CD4-positive, alpha-beta T cell (primary cell): ENCODE measurements at regions of chr21 and their contacts with region 1.

Region 1: DNA sequence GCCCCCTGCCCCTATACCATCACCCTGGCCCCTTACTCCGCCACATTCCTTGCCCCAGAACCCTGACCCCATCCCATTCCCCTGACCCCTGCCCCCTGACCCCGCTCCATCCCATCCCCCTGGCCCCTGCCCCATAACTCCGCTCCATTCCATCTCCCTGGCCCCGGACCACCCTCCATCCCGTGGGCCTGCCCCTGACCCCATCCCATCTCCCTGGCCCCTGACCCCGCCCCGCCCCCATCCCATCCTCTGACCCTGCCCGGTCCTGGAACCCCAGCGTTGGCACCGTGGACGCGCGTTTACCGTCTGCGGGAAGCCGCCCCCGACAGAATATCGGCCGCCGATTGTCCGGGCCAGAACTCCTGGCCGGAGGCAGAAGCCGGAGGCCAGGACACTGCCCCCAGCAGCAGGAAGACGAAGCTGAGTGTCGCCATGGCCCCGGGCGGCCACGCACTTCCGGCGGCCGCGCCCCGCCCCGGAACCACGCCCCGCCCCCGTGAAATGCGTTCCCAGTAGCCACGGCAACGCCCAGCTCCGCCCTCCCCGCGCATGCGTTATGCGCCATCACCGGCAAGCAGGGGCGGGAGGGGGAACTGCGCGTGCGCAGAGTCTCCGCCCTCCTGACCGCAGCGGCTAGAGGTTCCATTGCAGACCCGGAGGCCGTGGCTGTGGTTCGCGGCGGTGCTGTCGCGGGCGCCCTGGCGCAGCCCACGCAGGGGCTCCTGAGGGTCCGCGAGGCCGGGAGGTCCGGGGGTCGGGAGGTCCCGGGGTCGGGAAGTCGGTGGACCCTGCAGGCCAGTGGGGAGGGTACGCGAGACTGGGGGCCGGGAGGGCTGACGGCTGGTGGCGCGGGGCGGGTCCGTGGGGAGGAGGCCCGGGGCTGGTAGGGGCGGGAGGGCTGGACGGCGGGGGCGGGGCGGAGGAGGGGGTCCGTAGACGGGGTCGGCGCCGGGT is at the start of gene POFUT2:
- DNase-seq: peak; percentile 97 to 100 (median 99)
- ATAC-seq: peak; percentile 77
- H3K4me3 ChIP-seq: peak within 1 kb of the TSS; percentile 69
- H3K4me3 Mint-ChIP-seq: peak within 1 kb of the TSS; percentile 98
- H3K27ac ChIP-seq: peak within 1 kb of the TSS; percentile 53 to 57
- H3K27ac Mint-ChIP-seq: peak within 1 kb of the TSS; percentile 92
- H3K4me1 ChIP-seq: peaks cover 37% of the 10 kb centered on the region
- H3K4me1 Mint-ChIP-seq: peaks cover 40% of the 10 kb centered on the region
- H3K27me3 ChIP-seq: no peaks in the 10 kb centered on the region
- H3K27me3 Mint-ChIP-seq: no peaks in the 10 kb centered on the region
- CTCF ChIP-seq: no peak
- total RNA-seq, gene POFUT2: 56.6 to 57.2 TPM

Region 2: DNA sequence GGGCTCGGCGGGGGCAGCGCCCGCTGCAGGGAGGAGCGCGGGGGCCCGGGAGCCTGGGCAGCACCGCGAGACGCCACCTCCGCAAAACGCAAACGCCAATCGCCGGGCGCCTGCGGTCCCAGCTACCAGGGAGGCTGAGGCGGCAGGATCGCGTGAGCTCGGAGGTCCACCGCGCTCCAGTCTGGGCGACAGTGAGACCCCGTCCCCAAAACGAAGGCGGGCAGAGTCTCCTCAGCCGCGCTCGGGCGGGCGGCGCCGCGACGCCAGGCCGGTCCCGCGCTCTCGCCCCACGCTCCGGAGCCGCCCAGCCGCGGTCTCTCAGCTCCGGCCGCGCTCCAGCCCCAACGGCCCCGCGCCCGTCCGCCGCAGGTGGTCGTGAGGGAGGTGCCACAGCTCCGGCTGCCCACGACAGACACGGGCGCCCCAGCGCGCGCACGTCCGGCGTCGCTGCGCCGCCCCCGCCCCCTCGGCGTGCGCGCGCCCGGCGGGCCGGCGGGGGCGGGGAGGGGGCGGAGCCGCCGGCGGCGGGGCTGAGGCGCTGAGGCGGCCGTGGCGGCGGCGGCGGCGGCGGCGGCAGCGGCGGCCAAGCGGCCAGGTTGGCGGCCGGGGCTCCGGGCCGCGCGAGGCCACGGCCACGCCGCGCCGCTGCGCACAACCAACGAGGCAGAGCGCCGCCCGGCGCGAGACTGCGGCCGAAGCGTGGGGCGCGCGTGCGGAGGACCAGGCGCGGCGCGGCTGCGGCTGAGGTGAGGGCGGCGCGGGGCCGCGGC is 213.5 kb before region 1 on chr21 and contains the start of gene ADARB1:
- CTCF ChIA-PET with region 1: no interaction called
- POLR2A ChIA-PET with region 1: interaction called, 4 read pairs
- intact Hi-C with region 1: loop called in 1 of 2 experiments (anchors 10 kb)
- DNase-seq: peak; percentile 28 to 90 (median 58)
- ATAC-seq: peak; percentile 31
- H3K4me3 ChIP-seq: peak within 1 kb of the TSS; percentile 62
- H3K4me3 Mint-ChIP-seq: peak within 1 kb of the TSS; percentile 100
- H3K27ac ChIP-seq: no peak within 1 kb of the TSS
- H3K27ac Mint-ChIP-seq: peak within 1 kb of the TSS; percentile 98
- H3K4me1 ChIP-seq: peaks cover 44% of the 10 kb centered on the region
- H3K4me1 Mint-ChIP-seq: peaks cover 42% of the 10 kb centered on the region
- H3K27me3 ChIP-seq: no peaks in the 10 kb centered on the region
- H3K27me3 Mint-ChIP-seq: no peaks in the 10 kb centered on the region
- CTCF ChIP-seq: no peak
- total RNA-seq, gene ADARB1: 27.5 to 28.6 TPM

Region 3: GRCh38 chr21:45322960-45323461 is 35.3 kb after region 1 on chr21:
- CTCF ChIA-PET with region 1: no interaction called
- POLR2A ChIA-PET with region 1: interaction called, 18 read pairs
- intact Hi-C with region 1: no loop called
- DNase-seq: no peak
- ATAC-seq: no peak
- H3K4me3 ChIP-seq: no peak overlapping the region
- H3K4me3 Mint-ChIP-seq: peak overlapping the region; percentile 68
- H3K27ac ChIP-seq: peak overlapping the region in 1 of 2 donors; percentile 29
- H3K27ac Mint-ChIP-seq: peak overlapping the region; percentile 94
- H3K4me1 ChIP-seq: peaks cover 51% of the 10 kb centered on the region
- H3K4me1 Mint-ChIP-seq: peaks cover 19% of the 10 kb centered on the region
- H3K27me3 ChIP-seq: no peaks in the 10 kb centered on the region
- H3K27me3 Mint-ChIP-seq: no peaks in the 10 kb centered on the region
- CTCF ChIP-seq: no peak

Region 4: GRCh38 chr21:45341779-45342178 is 54.1 kb after region 1 on chr21:
- CTCF ChIA-PET with region 1: no interaction called
- POLR2A ChIA-PET with region 1: no interaction called
- intact Hi-C with region 1: no loop called
- DNase-seq: no peak
- ATAC-seq: no peak
- H3K4me3 ChIP-seq: no peak overlapping the region
- H3K4me3 Mint-ChIP-seq: no peak overlapping the region
- H3K27ac ChIP-seq: no peak overlapping the region
- H3K27ac Mint-ChIP-seq: no peak overlapping the region
- H3K4me1 ChIP-seq: no peaks in the 10 kb centered on the region
- H3K4me1 Mint-ChIP-seq: no peaks in the 10 kb centered on the region
- H3K27me3 ChIP-seq: peaks cover 0 to 12% of the 10 kb centered on the region in 2 experiments
- H3K27me3 Mint-ChIP-seq: peaks cover 18% of the 10 kb centered on the region
- CTCF ChIP-seq: no peak

Region 5: DNA sequence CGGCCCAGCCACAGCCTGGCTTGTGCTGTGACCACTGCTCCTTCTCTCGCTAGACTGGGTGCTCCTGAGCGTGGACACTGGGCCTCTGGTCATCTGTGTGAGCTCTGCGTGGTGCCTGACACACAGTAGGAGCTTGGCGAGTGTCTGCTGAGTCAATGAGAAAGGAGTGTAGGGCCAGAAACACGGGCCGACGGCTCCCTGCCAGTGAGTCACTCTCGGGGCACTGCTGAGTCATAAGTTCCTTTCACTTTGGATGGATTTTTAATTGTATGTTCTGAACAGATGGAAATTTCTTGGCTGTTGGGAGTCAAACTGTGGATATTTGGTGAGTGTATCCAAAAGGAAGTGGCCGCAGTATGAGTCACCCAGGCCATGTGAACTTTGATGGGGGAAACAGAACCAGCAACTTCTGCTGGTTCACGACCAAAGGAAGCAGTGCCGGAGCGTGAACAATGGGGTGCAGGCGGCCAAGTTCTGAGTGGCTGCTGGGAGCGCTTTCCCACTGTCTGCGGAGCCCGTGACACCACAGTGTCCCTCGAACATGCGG is 76.3 kb after region 1 on chr21:
- CTCF ChIA-PET with region 1: no interaction called
- POLR2A ChIA-PET with region 1: no interaction called
- intact Hi-C with region 1: no loop called
- DNase-seq: peak in 5 of 14 experiments; percentile 3 to 52 (median 9)
- ATAC-seq: no peak
- H3K4me3 ChIP-seq: no peak overlapping the region
- H3K4me3 Mint-ChIP-seq: no peak overlapping the region
- H3K27ac ChIP-seq: no peak overlapping the region
- H3K27ac Mint-ChIP-seq: no peak overlapping the region
- H3K4me1 ChIP-seq: peaks cover 3% of the 10 kb centered on the region
- H3K4me1 Mint-ChIP-seq: peaks cover 4% of the 10 kb centered on the region
- H3K27me3 ChIP-seq: peaks cover 0 to 4% of the 10 kb centered on the region in 2 experiments
- H3K27me3 Mint-ChIP-seq: peaks cover 6% of the 10 kb centered on the region
- CTCF ChIP-seq: no peak

Region 6: GRCh38 chr21:45427331-45428271 is 139.9 kb after region 1 on chr21:
- CTCF ChIA-PET with region 1: no interaction called
- POLR2A ChIA-PET with region 1: no interaction called
- intact Hi-C with region 1: no loop called
- DNase-seq: no peak
- ATAC-seq: no peak
- H3K4me3 ChIP-seq: no peak overlapping the region
- H3K4me3 Mint-ChIP-seq: no peak overlapping the region
- H3K27ac ChIP-seq: no peak overlapping the region
- H3K27ac Mint-ChIP-seq: no peak overlapping the region
- H3K4me1 ChIP-seq: no peaks in the 10 kb centered on the region
- H3K4me1 Mint-ChIP-seq: no peaks in the 10 kb centered on the region
- H3K27me3 ChIP-seq: no peaks in the 10 kb centered on the region
- H3K27me3 Mint-ChIP-seq: no peaks in the 10 kb centered on the region
- CTCF ChIP-seq: no peak

Region 7: DNA sequence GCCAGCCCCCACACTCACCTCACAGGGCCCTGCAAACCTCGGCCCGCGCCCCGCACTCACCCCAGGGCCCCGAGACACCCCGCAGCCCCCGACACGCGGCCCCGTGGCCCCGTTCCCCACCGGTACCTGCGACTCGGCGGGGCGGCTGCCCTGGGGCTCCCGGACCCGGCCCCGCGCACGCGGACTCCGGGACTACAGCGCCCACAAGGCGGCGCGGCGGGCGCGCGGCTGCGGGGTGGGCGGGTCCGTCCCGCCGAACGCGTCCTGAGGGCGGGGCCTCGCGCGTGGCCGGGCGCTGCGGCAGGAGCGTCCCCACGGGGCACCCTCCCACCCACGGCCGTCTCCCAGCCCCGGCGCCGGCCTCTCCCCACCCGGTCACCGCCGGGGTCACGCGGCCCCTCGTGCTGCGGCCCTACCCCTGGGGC is 254.5 kb after region 1 on chr21 and contains the start of gene SLC19A1:
- CTCF ChIA-PET with region 1: no interaction called
- POLR2A ChIA-PET with region 1: no interaction called
- intact Hi-C with region 1: loop called in 1 of 2 experiments (anchors 5 kb)
- DNase-seq: peak; percentile 48 to 90 (median 68)
- ATAC-seq: peak; percentile 83
- H3K4me3 ChIP-seq: peak within 1 kb of the TSS; percentile 46
- H3K4me3 Mint-ChIP-seq: peak within 1 kb of the TSS; percentile 86
- H3K27ac ChIP-seq: peak within 1 kb of the TSS in 1 of 2 donors; percentile 55
- H3K27ac Mint-ChIP-seq: peak within 1 kb of the TSS; percentile 80
- H3K4me1 ChIP-seq: peaks cover 23% of the 10 kb centered on the region
- H3K4me1 Mint-ChIP-seq: peaks cover 24% of the 10 kb centered on the region
- H3K27me3 ChIP-seq: no peaks in the 10 kb centered on the region
- H3K27me3 Mint-ChIP-seq: no peaks in the 10 kb centered on the region
- CTCF ChIP-seq: no peak
- total RNA-seq, gene SLC19A1: 11.5 to 12.0 TPM

Region 8: DNA sequence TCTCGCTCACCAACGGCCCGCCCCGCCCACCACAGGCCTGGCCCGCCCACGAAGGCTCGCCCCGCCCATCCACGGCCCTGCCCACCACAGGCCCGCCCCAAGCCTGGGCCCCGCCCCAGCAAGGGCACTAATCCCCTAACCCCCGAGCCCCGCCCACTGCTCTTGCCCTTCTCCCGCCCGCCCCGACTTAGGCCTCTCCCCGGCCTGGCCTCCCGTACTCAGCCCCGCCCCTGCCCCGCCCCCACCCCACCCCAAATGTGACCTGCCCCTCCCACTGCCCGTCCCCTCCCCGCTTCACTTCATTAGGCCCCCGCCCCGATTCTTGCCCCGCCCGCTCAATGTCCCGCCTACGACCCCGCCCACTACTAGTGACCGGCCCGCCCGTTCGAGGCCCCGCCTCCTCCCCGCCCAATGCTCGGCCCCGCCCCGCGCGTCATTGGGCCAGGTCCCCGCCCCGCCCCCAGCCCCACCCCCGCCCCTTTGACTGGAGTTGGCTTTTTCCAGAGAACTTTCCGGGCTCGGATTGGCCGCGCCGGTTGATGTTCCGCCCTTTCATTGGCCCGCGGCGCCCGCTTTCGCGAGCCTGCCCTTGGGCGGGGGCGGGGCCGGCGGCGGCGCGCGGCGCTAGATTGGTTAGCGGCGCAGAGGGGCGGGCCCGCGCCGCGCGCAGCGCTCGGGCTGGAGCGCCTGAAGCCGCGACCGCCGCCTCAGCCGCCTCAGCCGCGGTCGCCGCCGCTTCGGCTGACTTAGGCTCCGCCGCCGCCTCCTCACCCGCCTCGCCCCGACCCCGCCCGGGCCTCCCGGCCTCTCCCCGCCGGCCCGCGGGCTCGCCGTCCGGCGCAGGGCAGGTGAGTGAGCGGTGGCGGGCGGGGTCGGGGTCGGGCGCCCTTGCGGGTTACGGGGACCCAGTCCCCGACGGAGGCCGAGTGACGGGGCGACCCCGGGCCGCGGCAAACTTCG is 355.6 kb after region 1 on chr21 and contains the start of gene PCBP3:
- CTCF ChIA-PET with region 1: no interaction called
- POLR2A ChIA-PET with region 1: no interaction called
- intact Hi-C with region 1: loop called in 1 of 2 experiments (anchors 2 kb)
- DNase-seq: peak; percentile 89 to 99 (median 96)
- ATAC-seq: peak; percentile 78
- H3K4me3 ChIP-seq: peak within 1 kb of the TSS; percentile 24
- H3K4me3 Mint-ChIP-seq: peak within 1 kb of the TSS; percentile 77
- H3K27ac ChIP-seq: no peak within 1 kb of the TSS
- H3K27ac Mint-ChIP-seq: peak within 1 kb of the TSS; percentile 97
- H3K4me1 ChIP-seq: peaks cover 41% of the 10 kb centered on the region
- H3K4me1 Mint-ChIP-seq: peaks cover 53% of the 10 kb centered on the region
- H3K27me3 ChIP-seq: peaks cover 14 to 17% of the 10 kb centered on the region in 2 experiments
- H3K27me3 Mint-ChIP-seq: peaks cover 25% of the 10 kb centered on the region
- CTCF ChIP-seq: no peak
- total RNA-seq, gene PCBP3: 3.4 to 3.8 TPM

Region 9: DNA sequence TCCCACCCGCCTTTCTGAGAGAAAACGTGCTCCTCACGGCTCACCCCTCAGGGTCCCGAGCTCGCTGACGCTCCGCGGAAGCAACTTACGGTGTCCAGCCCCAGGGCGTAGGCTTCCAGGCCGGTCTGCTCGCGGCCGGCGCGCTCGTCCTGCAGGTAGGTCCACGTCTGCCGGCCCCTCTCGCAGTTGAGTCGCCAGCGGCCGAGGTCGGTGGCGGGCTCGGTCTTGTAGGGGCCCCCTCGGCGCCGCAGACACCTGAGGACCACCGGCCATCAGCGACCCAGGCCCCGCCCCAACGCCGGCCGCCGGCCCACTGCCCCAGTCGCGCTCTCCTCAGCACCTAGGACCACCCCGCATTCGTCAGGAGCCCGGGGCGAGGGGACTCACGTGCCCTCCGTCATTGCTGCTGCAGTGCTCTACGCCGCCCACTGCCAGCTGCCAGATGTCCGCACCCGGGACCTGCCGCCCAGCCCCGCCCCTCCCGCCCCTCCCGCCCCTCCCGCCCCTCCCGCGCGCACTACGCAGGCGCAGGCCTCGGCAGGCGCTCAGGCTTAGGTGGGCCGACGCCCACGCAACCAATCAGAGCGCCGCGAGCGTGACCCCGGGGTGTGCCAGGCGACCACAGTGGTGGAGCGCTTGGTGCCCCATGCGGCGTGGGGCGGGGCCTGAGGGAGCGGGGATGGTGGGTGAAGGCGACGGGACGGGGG is 940.8 kb after region 1 on chr21 and contains the start of gene LSS:
- CTCF ChIA-PET with region 1: no interaction called
- POLR2A ChIA-PET with region 1: no interaction called
- intact Hi-C with region 1: loop called in 1 of 2 experiments (anchors 5 kb)
- DNase-seq: peak; percentile 94 to 99 (median 98)
- ATAC-seq: peak; percentile 97
- H3K4me3 ChIP-seq: peak within 1 kb of the TSS; percentile 87
- H3K4me3 Mint-ChIP-seq: peak within 1 kb of the TSS; percentile 98
- H3K27ac ChIP-seq: peak within 1 kb of the TSS in 1 of 2 donors; percentile 43
- H3K27ac Mint-ChIP-seq: peak within 1 kb of the TSS; percentile 75
- H3K4me1 ChIP-seq: peaks cover 31% of the 10 kb centered on the region
- H3K4me1 Mint-ChIP-seq: peaks cover 54% of the 10 kb centered on the region
- H3K27me3 ChIP-seq: no peaks in the 10 kb centered on the region
- H3K27me3 Mint-ChIP-seq: no peaks in the 10 kb centered on the region
- CTCF ChIP-seq: no peak
- total RNA-seq, gene LSS: 30.4 TPM